Activated B cell treated with CpG ODN at 0.5 μM for 24 hours (primary cell): ENCODE measurements at regions of chr6 and their contacts with region 1.

Region 1: GRCh38 chr6:29964887-29965562 is 22.7 kb downstream of the HLA-A start:
- DNase-seq: peak; percentile 53
- ATAC-seq: peak; percentile 97
- H3K4me3 Mint-ChIP-seq: peak overlapping the region; percentile 82
- H3K27ac Mint-ChIP-seq: peak overlapping the region; percentile 92
- H3K4me1 Mint-ChIP-seq: peaks cover 53% of the 10 kb centered on the region
- H3K27me3 Mint-ChIP-seq: no peaks in the 10 kb centered on the region
- CTCF ChIP-seq: no peak

Region 2: DNA sequence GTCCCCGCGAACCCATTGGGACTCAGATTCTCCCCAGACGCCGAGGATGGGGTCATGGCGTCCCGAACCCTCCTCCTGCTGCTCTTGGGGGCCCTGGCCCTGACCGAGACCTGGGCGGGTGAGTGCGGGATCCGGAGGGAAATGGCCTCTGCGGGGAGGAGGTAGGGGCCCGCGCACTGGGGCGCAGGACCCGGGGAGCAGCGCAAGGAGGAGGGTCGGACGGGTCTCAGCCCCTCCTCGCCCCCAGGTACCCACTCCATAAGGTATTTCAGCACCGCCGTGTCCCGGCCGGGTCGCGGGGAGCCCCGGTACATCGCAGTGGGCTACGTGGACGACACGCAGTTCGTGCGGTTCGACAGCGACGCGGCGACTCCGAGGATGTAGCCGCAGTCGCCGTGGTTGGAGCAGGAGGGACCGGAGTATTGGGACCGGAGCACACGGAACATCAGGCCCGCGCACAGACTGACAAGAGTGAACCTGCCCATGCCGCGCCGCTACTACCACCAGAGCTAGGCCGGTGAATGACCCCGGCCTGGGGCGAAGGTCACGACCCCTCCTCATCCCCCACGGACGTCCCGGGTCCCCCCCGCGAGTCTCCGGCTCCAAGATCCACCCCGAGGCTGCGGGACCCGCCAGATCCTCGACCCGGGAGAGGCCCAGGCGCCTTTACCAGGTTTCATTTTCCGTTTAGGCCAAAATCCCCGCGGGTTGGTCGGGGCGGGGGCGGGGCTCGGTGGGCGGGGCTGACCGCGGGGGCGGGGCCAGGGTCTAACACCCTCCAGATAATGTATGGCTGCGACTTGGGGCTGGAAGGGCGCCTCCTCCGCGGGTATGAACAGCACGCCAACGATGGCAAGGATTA is 38.4 kb before region 1 on chr6:
- CTCF ChIA-PET with region 1: no interaction called
- POLR2A ChIA-PET with region 1: interaction called, 31 read pairs
- intact Hi-C with region 1: loop called (anchors 2 kb)
- DNase-seq: peak; percentile 50
- ATAC-seq: peak; percentile 77
- H3K4me3 Mint-ChIP-seq: peak overlapping the region; percentile 90
- H3K27ac Mint-ChIP-seq: peak overlapping the region; percentile 94
- H3K4me1 Mint-ChIP-seq: peaks cover 16% of the 10 kb centered on the region
- H3K27me3 Mint-ChIP-seq: no peaks in the 10 kb centered on the region
- CTCF ChIP-seq: no peak

Region 3: DNA sequence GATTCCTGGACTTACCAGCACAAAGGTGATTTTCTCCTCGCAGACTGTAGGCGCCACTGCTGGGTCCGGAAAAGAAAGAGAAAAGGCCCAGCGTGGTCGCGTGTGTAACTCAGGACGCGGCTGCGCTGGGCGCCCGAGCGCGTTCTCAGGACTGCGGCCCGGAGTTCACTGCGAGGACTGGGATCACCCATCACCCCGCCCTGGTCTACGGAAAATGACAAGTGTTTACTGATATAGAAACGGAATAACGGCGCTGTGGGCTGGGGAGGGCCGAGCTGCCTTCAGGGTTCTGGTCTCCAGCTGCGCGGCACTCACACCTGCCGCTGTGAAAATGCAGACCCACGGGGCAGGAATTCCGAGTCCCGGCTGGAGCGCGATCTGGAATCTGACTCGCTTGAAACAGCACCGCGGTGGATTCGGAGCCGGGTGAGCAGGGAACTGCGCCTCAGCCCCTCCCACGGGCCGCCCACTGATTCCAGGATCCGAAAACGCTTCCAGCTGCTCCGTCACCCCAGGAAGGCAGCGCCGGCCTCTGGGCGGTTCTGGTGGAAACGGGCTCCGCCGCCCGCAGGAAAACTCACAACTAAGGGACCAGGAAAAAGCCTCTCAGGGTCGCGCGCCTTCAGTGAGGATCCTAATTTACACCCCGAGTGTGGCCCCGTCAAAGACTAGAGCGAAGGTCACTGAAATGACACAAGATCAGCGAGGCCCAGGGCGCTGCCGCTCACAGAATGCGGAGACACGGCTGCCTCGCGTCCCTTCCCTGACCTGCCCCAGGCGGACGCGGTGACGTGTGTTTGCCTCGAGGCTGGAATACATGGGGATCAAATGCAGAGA is 11.8 kb after region 1 on chr6:
- CTCF ChIA-PET with region 1: interaction called, 4 read pairs
- POLR2A ChIA-PET with region 1: interaction called, 20 read pairs
- intact Hi-C with region 1: loop called (anchors 1 kb)
- DNase-seq: peak; percentile 45
- ATAC-seq: peak; percentile 87
- H3K4me3 Mint-ChIP-seq: peak overlapping the region; percentile 91
- H3K27ac Mint-ChIP-seq: peak overlapping the region; percentile 26
- H3K4me1 Mint-ChIP-seq: peaks cover 33% of the 10 kb centered on the region
- H3K27me3 Mint-ChIP-seq: peaks cover 47% of the 10 kb centered on the region
- CTCF ChIP-seq: no peak

Region 4: DNA sequence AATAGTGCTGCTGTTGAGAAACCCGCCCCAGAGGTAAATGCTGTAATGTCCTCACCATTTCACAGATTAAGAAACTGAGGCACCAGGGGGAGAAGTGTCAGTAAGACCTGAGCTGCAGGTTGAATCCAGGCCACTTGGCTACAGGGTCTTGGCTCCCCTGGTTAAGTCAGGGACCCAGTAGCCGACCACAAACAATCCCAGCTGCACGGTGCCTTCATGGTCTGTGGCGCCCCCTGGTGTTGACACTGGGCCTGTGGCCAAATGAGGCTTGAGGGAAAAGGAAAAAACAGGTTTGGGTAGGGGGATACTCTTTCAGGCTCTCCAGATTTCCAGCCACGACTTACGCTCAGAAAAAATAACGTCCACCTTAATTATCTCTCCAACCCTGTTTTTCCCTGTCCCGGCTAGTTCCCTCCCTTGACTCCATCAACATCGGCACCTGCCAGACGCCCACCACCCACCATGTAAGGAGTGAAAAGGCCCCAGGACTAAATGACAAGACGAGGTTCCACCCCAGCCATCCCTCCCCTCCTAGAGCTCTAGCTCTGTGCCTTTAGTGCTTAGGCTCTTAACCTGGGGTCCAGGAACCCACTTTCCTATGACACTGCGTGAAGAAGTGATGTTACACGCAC is 48.4 kb after region 1 on chr6:
- CTCF ChIA-PET with region 1: interaction called, 4 read pairs
- POLR2A ChIA-PET with region 1: no interaction called
- intact Hi-C with region 1: loop called (anchors 2 kb)
- DNase-seq: no peak
- ATAC-seq: peak; percentile 70
- H3K4me3 Mint-ChIP-seq: no peak overlapping the region
- H3K27ac Mint-ChIP-seq: no peak overlapping the region
- H3K4me1 Mint-ChIP-seq: no peaks in the 10 kb centered on the region
- H3K27me3 Mint-ChIP-seq: no peaks in the 10 kb centered on the region
- CTCF ChIP-seq: peak; percentile 53

Region 5: GRCh38 chr6:30614843-30615218 is 649.8 kb after region 1 on chr6:
- CTCF ChIA-PET with region 1: no interaction called
- POLR2A ChIA-PET with region 1: no interaction called
- intact Hi-C with region 1: no loop called
- DNase-seq: peak; percentile 43
- ATAC-seq: peak; percentile 54
- H3K4me3 Mint-ChIP-seq: peak overlapping the region; percentile 99
- H3K27ac Mint-ChIP-seq: peak overlapping the region; percentile 99
- H3K4me1 Mint-ChIP-seq: peaks cover 55% of the 10 kb centered on the region
- H3K27me3 Mint-ChIP-seq: no peaks in the 10 kb centered on the region
- CTCF ChIP-seq: no peak